ENCODE measurements at regions of chr17 and their contacts with region 1.

Region 1: GRCh38 chr17:81294856-81295680 is at the start of gene SLC38A10:
- DNase-seq: peak; percentile 81 to 93 (median 89)
- ATAC-seq: peak; percentile 91
- H3K4me3 ChIP-seq: peak within 1 kb of the TSS; percentile 82
- H3K4me3 Mint-ChIP-seq: peak within 1 kb of the TSS; percentile 92 to 99 (median 97)
- H3K27ac ChIP-seq: peak within 1 kb of the TSS; percentile 94
- H3K27ac Mint-ChIP-seq: peak within 1 kb of the TSS; percentile 92 to 98 (median 96)
- H3K4me1 ChIP-seq: peaks cover 22% of the 10 kb centered on the region in 2 donors
- H3K4me1 Mint-ChIP-seq: peaks cover 18 to 50% (median 36%) of the 10 kb centered on the region in 7 donors
- H3K27me3 ChIP-seq: no peaks in the 10 kb centered on the region
- H3K27me3 Mint-ChIP-seq: no peaks in the 10 kb centered on the region
- total RNA-seq, gene SLC38A10: 54.9 to 122 (median 86.5) TPM

Region 2: GRCh38 chr17:81253358-81254131 is 41.5 kb before region 1 on chr17:
- CTCF ChIA-PET with region 1: interaction called, 5 read pairs
- POLR2A ChIA-PET with region 1: no interaction called
- intact Hi-C with region 1: loop called (anchors 1 kb)
- DNase-seq: peak; percentile 34 to 74 (median 63)
- ATAC-seq: peak; percentile 83
- H3K4me3 ChIP-seq: no peak overlapping the region
- H3K4me3 Mint-ChIP-seq: no peak overlapping the region
- H3K27ac ChIP-seq: no peak overlapping the region
- H3K27ac Mint-ChIP-seq: peak overlapping the region in 5 of 9 donors; percentile 2 to 67 (median 27)
- H3K4me1 ChIP-seq: no peaks in the 10 kb centered on the region
- H3K4me1 Mint-ChIP-seq: peaks cover 6 to 10% (median 7%) of the 10 kb centered on the region in 7 donors
- H3K27me3 ChIP-seq: no peaks in the 10 kb centered on the region
- H3K27me3 Mint-ChIP-seq: no peaks in the 10 kb centered on the region

Region 3: GRCh38 chr17:81394921-81395599 is 100.0 kb after region 1 on chr17 and contains the start of gene BAHCC1:
- CTCF ChIA-PET with region 1: no interaction called
- POLR2A ChIA-PET with region 1: interaction called, 4 read pairs
- intact Hi-C with region 1: loop called in 1 of 2 experiments (anchors 10 kb)
- DNase-seq: peak; percentile 47 to 68 (median 63)
- ATAC-seq: peak; percentile 82
- H3K4me3 ChIP-seq: no peak within 1 kb of the TSS
- H3K4me3 Mint-ChIP-seq: peak within 1 kb of the TSS; percentile 47 to 69 (median 59)
- H3K27ac ChIP-seq: no peak within 1 kb of the TSS
- H3K27ac Mint-ChIP-seq: peak within 1 kb of the TSS in 7 of 9 donors; percentile 17 to 84 (median 54)
- H3K4me1 ChIP-seq: peaks cover 46% of the 10 kb centered on the region in 2 donors
- H3K4me1 Mint-ChIP-seq: peaks cover 0 to 48% (median 21%) of the 10 kb centered on the region in 7 donors
- H3K27me3 ChIP-seq: peaks cover 28 to 64% of the 10 kb centered on the region in 2 donors
- H3K27me3 Mint-ChIP-seq: peaks cover 31 to 66% (median 46%) of the 10 kb centered on the region in 5 donors
- total RNA-seq, gene BAHCC1: 0.05 to 3.8 (median 0.68) TPM in 4 of 5 experiments, not detected in the other

Region 4: GRCh38 chr17:81512560-81513371 is 217.7 kb after region 1 on chr17 and contains the start of gene ACTG1:
- CTCF ChIA-PET with region 1: no interaction called
- POLR2A ChIA-PET with region 1: interaction called, 8 read pairs
- intact Hi-C with region 1: loop called in 1 of 2 experiments (anchors 10 kb)
- DNase-seq: peak; percentile 87 to 93 (median 92)
- ATAC-seq: peak; percentile 87
- H3K4me3 ChIP-seq: peak within 1 kb of the TSS; percentile 77
- H3K4me3 Mint-ChIP-seq: peak within 1 kb of the TSS; percentile 91 to 100 (median 98)
- H3K27ac ChIP-seq: peak within 1 kb of the TSS; percentile 79
- H3K27ac Mint-ChIP-seq: peak within 1 kb of the TSS; percentile 92 to 99 (median 95)
- H3K4me1 ChIP-seq: peaks cover 12 to 31% of the 10 kb centered on the region in 2 donors
- H3K4me1 Mint-ChIP-seq: peaks cover 23 to 53% (median 47%) of the 10 kb centered on the region in 7 donors
- H3K27me3 ChIP-seq: no peaks in the 10 kb centered on the region
- H3K27me3 Mint-ChIP-seq: peaks cover 0 to 7% (median 0%) of the 10 kb centered on the region in 5 donors
- total RNA-seq, gene ACTG1: 971 to 4,639 (median 1,185) TPM

Region 5: DNA sequence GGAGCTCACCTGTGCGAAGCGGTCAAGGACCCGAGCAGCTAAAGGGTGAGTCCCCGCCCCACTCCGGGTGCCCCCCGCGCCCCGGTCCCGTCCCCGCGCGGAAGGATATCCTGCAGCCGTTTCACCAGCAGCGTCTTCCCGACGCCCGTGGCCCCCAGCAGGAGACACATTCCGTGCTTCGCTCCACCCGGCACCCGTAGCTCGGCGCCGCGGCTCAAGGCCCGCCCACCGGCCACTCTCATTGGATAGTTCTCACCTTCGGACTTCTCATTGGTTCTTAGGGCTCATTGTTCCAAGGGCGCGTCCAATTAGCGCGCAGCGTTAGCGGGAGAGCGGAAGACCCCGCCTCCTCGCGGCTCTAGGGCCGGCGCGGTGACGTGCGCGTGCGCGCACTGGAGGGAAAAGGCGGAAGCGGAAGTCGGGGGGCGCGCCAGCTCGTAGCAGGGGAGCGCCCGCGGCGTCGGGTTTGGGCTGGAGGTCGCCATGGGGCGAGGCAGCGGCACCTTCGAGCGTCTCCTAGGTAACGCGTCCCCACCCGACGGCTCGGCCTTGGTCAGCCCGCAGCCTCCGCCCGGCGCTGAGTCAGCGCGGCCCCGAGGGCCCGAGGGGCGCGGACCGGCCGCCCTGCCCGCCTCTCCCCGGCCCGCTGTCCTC is 388.6 kb after region 1 on chr17 and contains the starts of genes ARL16 and HGS:
- CTCF ChIA-PET with region 1: no interaction called
- POLR2A ChIA-PET with region 1: no interaction called
- intact Hi-C with region 1: loop called in 1 of 2 experiments (anchors 2 kb)
- DNase-seq: peak; percentile 91 to 98 (median 97)
- ATAC-seq: peak; percentile 98
- H3K4me3 ChIP-seq: peak within 1 kb of the TSS; percentile 76
- H3K4me3 Mint-ChIP-seq: peak within 1 kb of the TSS; percentile 88 to 99 (median 96)
- H3K27ac ChIP-seq: peak within 1 kb of the TSS; percentile 84
- H3K27ac Mint-ChIP-seq: peak within 1 kb of the TSS; percentile 83 to 97 (median 95)
- H3K4me1 ChIP-seq: peaks cover 22 to 24% of the 10 kb centered on the region in 2 donors
- H3K4me1 Mint-ChIP-seq: peaks cover 22 to 49% (median 40%) of the 10 kb centered on the region in 7 donors
- H3K27me3 ChIP-seq: no peaks in the 10 kb centered on the region
- H3K27me3 Mint-ChIP-seq: peaks cover 0 to 3% (median 0%) of the 10 kb centered on the region in 5 donors
- total RNA-seq, gene ARL16: 12.0 to 30.6 (median 30.1) TPM
- total RNA-seq, gene HGS: 108 to 174 (median 153) TPM

Measured in naive thymus-derived CD4-positive, alpha-beta T cell (primary cell).